GM10248 (cell line): ENCODE measurements at regions of chr9 and their contacts with region 1.

Region 1: GRCh38 chr9:36148311-36149051 is 11.9 kb downstream of the GLIPR2 start:
- DNase-seq: peak; percentile 58
- CTCF ChIP-seq: no peak

Region 2: DNA sequence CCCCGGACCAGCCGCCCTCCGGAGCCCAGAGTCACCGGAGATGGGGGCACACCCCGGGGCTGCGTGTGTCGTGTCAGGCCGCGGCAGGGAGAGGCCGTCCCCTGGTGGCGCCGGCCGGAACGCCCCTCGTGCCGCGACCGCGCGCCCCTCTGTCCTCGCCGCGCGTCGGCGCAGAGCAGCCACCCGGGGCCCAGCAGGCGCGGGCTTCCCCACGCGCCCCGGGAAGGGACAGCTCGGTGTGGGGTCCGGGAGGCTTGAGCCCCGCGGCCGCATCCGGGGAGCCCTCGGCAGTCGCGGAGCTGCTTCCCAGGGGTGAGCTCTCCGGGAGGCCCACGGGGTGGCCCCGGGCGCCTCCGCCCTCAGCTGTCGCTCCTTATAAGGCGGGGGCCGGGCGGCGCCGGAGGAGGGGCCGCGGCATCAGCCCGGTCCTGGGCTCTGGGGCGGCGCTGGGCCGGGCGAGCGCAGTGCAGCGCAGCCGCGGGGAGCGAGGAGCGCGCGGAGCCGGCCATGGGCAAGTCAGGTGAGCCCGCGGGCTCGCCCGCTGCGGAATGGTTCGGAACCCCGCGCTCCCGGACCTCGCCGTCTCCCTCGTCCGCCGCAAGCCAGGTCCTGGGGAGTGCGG is 12.1 kb before region 1 on chr9 and contains the start of gene GLIPR2:
- CTCF ChIA-PET with region 1: interaction called, 13 read pairs
- POLR2A ChIA-PET with region 1: no interaction called
- DNase-seq: peak; percentile 95
- CTCF ChIP-seq: peak; percentile 18